ENCODE measurements at regions of chr5 and their contacts with region 1.

Region 1: DNA sequence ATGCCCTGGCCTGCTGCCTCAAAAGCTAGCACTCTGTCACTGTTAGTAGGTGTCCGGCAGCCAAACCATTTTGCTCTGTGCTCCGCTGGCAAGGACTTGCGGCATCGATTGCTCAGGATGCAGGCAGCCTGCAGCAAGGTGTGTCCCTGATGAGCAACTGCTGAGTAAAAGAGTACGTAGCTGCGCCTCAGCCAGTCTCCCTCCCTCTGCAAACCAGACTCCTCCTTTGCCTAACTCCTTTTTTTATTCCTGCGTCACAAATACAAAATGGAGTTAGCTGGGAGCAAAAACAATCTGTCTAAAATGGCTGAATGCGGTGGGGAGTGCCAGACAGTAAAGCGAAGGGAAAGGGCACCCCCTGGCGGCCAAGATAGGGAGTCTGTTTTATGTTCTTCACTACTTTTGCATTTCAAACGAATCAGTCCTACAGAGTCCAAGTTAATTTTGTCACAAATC is 61.1 kb downstream of the DIAPH1 start:
- DNase-seq: peak; percentile 94
- H3K4me3 ChIP-seq: peak overlapping the region in 2 of 3 experiments; percentile 24 to 25
- H3K27ac ChIP-seq: peak overlapping the region; percentile 45
- H3K4me1 ChIP-seq: peaks cover 35% of the 10 kb centered on the region
- H3K27me3 ChIP-seq: no peaks in the 10 kb centered on the region
- CTCF ChIP-seq: peak; percentile 79 to 87
- POLR2A ChIP-seq: no peak

Region 2: GRCh38 chr5:141320225-141321169 is 237.2 kb before region 1 on chr5 and contains the start of gene TAF7:
- CTCF ChIA-PET with region 1: interaction called, 10 read pairs
- POLR2A ChIA-PET with region 1: no interaction called
- dilution Hi-C with region 1: no loop called
- intact Hi-C with region 1: loop called (anchors 1 kb)
- DNase-seq: peak; percentile 91
- H3K4me3 ChIP-seq: peak within 1 kb of the TSS; percentile 56 to 91 (median 87)
- H3K27ac ChIP-seq: peak within 1 kb of the TSS; percentile 91
- H3K4me1 ChIP-seq: no peaks in the 10 kb centered on the region
- H3K27me3 ChIP-seq: no peaks in the 10 kb centered on the region
- CTCF ChIP-seq: peak; percentile 78 to 88
- POLR2A ChIP-seq: peak; percentile 94
- total RNA-seq, gene TAF7: 55.0 and 62.0 TPM in 2 replicates

Region 3: DNA sequence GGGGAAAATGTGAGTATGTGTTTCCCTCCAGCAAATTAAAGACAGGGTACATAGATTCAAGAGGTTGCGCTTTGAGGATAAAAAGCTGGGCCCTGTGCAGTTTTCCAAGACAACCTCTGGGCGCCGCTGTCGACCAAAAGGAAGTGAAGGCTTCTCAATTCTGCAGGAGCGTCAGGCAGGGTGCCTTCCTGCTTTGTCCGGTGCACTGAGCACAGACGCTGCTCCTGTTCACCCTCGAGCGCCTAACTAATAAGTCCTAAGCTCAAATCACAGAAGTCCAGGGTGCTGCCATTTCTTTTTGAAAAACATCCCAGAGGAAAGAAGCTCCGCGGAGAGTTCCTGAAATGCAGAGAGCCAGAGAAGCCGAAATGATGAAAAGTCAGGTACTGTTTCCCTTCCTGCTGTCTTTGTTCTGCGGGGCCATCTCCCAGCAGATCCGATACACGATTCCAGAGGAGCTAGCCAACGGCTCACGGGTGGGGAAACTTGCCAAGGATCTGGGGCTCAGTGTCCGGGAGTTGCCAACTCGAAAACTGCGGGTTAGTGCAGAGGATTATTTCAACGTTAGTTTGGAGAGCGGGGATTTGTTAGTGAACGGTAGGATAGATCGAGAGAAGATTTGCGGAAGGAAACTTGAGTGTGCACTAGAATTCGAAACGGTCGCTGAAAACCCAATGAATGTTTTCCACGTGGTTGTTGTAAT is 207.6 kb before region 1 on chr5 and contains the start of gene PCDHGB1:
- CTCF ChIA-PET with region 1: interaction called, 25 read pairs
- POLR2A ChIA-PET with region 1: no interaction called
- dilution Hi-C with region 1: no loop called
- intact Hi-C with region 1: loop called (anchors 5 kb)
- DNase-seq: no peak
- H3K4me3 ChIP-seq: no peak within 1 kb of the TSS
- H3K27ac ChIP-seq: no peak within 1 kb of the TSS
- H3K4me1 ChIP-seq: no peaks in the 10 kb centered on the region
- H3K27me3 ChIP-seq: peaks cover 25 to 48% of the 10 kb centered on the region in 2 experiments
- CTCF ChIP-seq: peak; percentile 41 to 44
- POLR2A ChIP-seq: no peak
- total RNA-seq, gene PCDHGB1: 0.58 and 0.62 TPM in 2 replicates

Region 4: DNA sequence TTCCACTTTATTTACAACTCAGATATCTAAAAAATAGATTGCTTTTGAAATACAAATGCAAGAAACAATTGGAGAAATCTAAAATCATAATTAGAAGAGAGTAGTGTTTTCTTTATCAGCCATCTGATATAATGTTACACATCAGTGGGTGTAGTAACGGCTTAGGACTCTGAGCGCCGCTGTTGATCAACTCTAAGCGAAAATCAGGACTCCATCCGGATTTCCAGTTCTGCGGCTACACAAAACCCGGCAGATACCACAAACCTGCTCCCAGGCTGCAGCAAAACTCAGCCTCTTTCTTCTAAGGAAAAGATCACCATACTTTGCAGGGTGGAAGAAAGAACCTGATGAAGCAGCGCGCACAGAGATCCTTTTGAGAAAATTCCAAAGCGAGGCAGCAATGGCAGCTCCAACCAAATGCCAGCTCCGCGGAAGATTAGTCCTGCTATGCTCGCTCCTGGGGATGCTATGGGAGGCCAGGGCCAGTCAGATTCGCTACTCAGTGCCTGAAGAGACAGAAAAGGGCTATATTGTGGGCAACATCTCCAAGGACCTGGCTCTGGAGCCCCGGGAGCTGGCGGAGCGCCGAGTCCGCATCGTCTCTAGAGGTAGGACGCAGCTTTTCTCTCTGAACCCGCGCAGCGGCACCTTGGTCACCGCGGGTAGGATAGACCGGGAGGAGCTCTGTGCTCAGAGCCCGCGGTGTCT is 155.0 kb before region 1 on chr5 and contains the start of gene PCDHGA9:
- CTCF ChIA-PET with region 1: interaction called, 58 read pairs
- POLR2A ChIA-PET with region 1: no interaction called
- dilution Hi-C with region 1: no loop called
- intact Hi-C with region 1: no loop called
- DNase-seq: no peak
- H3K4me3 ChIP-seq: peak within 1 kb of the TSS in 2 of 3 experiments; percentile 9 to 28
- H3K27ac ChIP-seq: no peak within 1 kb of the TSS
- H3K4me1 ChIP-seq: peaks cover 2% of the 10 kb centered on the region
- H3K27me3 ChIP-seq: peaks cover 47 to 68% of the 10 kb centered on the region in 2 experiments
- CTCF ChIP-seq: peak; percentile 37 to 57
- POLR2A ChIP-seq: no peak
- total RNA-seq, gene PCDHGA9: 3.5 and 3.9 TPM in 2 replicates

Region 5: GRCh38 chr5:141430332-141431113 is 127.2 kb before region 1 on chr5 and contains the start of gene PCDHGA12:
- CTCF ChIA-PET with region 1: interaction called, 235 read pairs
- POLR2A ChIA-PET with region 1: interaction called, 10 read pairs
- dilution Hi-C with region 1: no loop called
- intact Hi-C with region 1: loop called (anchors 1 kb)
- DNase-seq: peak; percentile 87
- H3K4me3 ChIP-seq: peak within 1 kb of the TSS; percentile 30 to 67 (median 40)
- H3K27ac ChIP-seq: peak within 1 kb of the TSS; percentile 10
- H3K4me1 ChIP-seq: peaks cover 17% of the 10 kb centered on the region
- H3K27me3 ChIP-seq: peaks cover 25 to 48% of the 10 kb centered on the region in 2 experiments
- CTCF ChIP-seq: peak; percentile 45 to 69
- POLR2A ChIP-seq: no peak
- total RNA-seq, gene PCDHGA12: 7.6 and 9.9 TPM in 2 replicates

Region 6: GRCh38 chr5:141524604-141525597 is 32.8 kb before region 1 on chr5:
- CTCF ChIA-PET with region 1: interaction called, 56 read pairs
- POLR2A ChIA-PET with region 1: no interaction called
- dilution Hi-C with region 1: no loop called
- intact Hi-C with region 1: loop called (anchors 1 kb)
- DNase-seq: peak; percentile 96
- H3K4me3 ChIP-seq: no peak overlapping the region
- H3K27ac ChIP-seq: peak overlapping the region; percentile 22
- H3K4me1 ChIP-seq: peaks cover 29% of the 10 kb centered on the region
- H3K27me3 ChIP-seq: no peaks in the 10 kb centered on the region
- CTCF ChIP-seq: peak; percentile 99 to 100
- POLR2A ChIP-seq: no peak

Region 7: DNA sequence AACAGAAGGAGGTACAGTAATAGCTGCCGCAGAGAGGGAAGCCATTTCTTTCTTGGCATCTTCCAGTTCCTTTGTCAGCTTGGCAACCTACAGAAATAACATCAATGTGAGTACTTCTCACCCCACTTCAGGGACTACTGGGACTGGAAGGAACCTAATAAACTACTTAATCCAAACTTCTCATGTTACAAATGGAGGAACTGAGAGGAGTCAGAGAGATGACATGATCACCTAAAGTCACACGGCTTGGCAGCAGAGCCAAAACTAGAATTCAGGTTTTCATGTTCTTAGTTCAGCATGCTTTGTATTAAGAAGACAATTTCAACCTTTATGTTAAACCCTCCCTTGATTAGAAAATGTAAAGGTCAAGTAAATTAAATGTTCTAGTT is 16.4 kb after region 1 on chr5:
- CTCF ChIA-PET with region 1: no interaction called
- POLR2A ChIA-PET with region 1: no interaction called
- dilution Hi-C with region 1: no loop called
- intact Hi-C with region 1: no loop called
- DNase-seq: no peak
- H3K4me3 ChIP-seq: no peak overlapping the region
- H3K27ac ChIP-seq: no peak overlapping the region
- H3K4me1 ChIP-seq: no peaks in the 10 kb centered on the region
- H3K27me3 ChIP-seq: no peaks in the 10 kb centered on the region
- CTCF ChIP-seq: no peak
- POLR2A ChIP-seq: no peak